ENCODE measurements at regions of chr11 and their contacts with region 1.

Region 1: GRCh38 chr11:106727256-106727655 is 291.0 kb downstream of the GUCY1A2 start:
- DNase-seq: no peak
- ATAC-seq: no peak

Region 2: GRCh38 chr11:106821826-106822225 is 94.6 kb after region 1 on chr11:
- intact Hi-C with region 1: no loop called
- DNase-seq: no peak
- ATAC-seq: no peak

Region 3: GRCh38 chr11:107043242-107044006 is 316.2 kb after region 1 on chr11:
- intact Hi-C with region 1: loop called (anchors 5 kb)
- DNase-seq: no peak
- ATAC-seq: no peak